ENCODE measurements at regions of chr12 and their contacts with region 1.

Region 1: GRCh38 chr12:39619660-39620433 is at the start of gene ABCD2:
- ATAC-seq: peak; percentile 95 to 98 (median 98)
- H3K4me3 ChIP-seq: peak within 1 kb of the TSS; percentile 40 to 55 (median 41)
- H3K27ac ChIP-seq: peak within 1 kb of the TSS in 1 of 2 donors; percentile 23
- H3K4me1 ChIP-seq: peaks cover 2% of the 10 kb centered on the region in 2 donors
- total RNA-seq, gene ABCD2: 0.05 to 3.2 (median 0.28) TPM in 6 of 8 experiments, not detected in the others

Region 2: GRCh38 chr12:39300799-39301198 is 319.0 kb before region 1 on chr12:
- in situ Hi-C with region 1: loop called in 1 of 9 experiments (anchors 25 kb)
- ATAC-seq: peak in 2 of 8 experiments; percentile 25 to 38
- H3K4me3 ChIP-seq: no peak overlapping the region
- H3K27ac ChIP-seq: no peak overlapping the region
- H3K4me1 ChIP-seq: peaks cover 0 to 2% of the 10 kb centered on the region in 2 donors

Region 3: DNA sequence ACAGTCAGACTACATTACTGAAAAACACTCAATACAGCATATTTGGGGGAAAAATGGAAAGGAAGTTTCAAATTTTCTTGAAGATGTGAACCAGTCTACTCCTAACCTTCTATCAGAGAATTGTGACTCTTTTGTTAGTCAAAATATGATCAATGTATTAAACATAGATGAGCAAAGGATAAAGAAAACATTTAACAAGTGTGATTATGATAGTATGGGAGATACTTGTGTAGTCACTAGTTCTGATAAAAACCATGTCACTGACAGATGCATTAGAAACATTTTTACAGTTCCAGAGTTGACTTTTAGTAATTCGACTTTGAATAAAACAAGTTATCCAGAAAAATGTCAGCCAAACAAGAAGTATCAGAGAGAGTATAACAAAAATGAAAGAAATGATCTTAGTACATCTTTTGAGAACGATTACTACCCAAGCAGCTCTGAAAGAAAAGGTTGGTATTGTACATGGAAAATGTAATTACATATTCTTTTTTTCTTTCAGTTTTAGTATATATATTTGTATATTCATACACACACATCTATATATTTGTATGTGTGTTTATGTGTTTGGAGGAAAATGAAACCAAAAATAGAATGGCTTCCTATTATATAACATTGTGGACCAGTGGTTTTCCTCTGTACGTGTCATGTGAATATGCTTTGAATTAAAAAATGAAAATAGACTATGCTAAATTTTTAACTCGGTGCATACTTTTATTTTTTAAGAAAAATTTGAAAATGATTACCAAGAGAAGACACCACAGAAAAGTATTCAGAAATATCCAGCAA is 63.0 kb after region 1 on chr12:
- in situ Hi-C with region 1: no loop called
- ATAC-seq: no peak
- H3K4me3 ChIP-seq: no peak overlapping the region
- H3K27ac ChIP-seq: no peak overlapping the region
- H3K4me1 ChIP-seq: no peaks in the 10 kb centered on the region